ENCODE measurements at regions of chr1 and their contacts with region 1.

Region 1: DNA sequence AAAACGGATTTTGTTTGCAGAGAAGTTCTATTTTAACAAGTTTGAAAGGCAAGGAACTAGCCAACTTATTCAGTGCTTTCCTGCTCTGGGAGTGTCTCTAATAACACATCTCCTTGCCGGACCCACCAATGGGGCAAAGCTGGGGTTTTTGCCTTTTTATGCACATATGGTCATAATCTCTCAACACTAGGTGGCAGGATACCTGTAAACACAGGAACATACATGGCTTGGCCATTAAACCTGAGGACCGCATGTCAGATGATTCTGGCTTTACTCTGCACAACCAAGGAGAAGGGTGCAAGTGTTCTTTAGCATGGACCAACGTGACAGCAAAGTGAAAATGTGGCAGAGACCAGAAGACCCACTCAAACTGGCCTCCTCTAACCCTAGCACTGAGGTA is 4.9 kb downstream of the TMEM9 start:
- DNase-seq: peak; percentile 66 to 72 (median 70)
- ATAC-seq: peak; percentile 68
- H3K4me3 ChIP-seq: no peak overlapping the region
- H3K27ac ChIP-seq: no peak overlapping the region
- H3K4me1 ChIP-seq: peaks cover 8 to 16% of the 10 kb centered on the region in 2 experiments; a peak in 4 of 5 replicates
- H3K27me3 ChIP-seq: no peaks in the 10 kb centered on the region
- CTCF ChIP-seq: peak; percentile 72 to 86 (median 77)
- EP300 ChIP-seq: no peak
- POLR2A ChIP-seq: no peak
- RAD21 ChIP-seq: peak; percentile 70 to 83

Region 2: GRCh38 chr1:201184307-201185122 is 35.1 kb after region 1 on chr1:
- CTCF ChIA-PET with region 1: interaction called, 22 read pairs
- POLR2A ChIA-PET with region 1: interaction called, 3 read pairs
- in situ Hi-C with region 1: no loop called
- intact Hi-C with region 1: loop called (anchors 1 kb)
- DNase-seq: peak; percentile 33 to 61 (median 44)
- ATAC-seq: peak; percentile 98
- H3K4me3 ChIP-seq: no peak overlapping the region
- H3K27ac ChIP-seq: no peak overlapping the region
- H3K4me1 ChIP-seq: peaks cover 0 to 3% of the 10 kb centered on the region in 2 experiments; a peak in 1 of 5 replicates
- H3K27me3 ChIP-seq: peaks cover 35 to 69% of the 10 kb centered on the region in 2 experiments
- CTCF ChIP-seq: peak; percentile 78 to 91 (median 79)
- EP300 ChIP-seq: no peak
- POLR2A ChIP-seq: no peak
- RAD21 ChIP-seq: peak; percentile 61 to 82

Region 3: DNA sequence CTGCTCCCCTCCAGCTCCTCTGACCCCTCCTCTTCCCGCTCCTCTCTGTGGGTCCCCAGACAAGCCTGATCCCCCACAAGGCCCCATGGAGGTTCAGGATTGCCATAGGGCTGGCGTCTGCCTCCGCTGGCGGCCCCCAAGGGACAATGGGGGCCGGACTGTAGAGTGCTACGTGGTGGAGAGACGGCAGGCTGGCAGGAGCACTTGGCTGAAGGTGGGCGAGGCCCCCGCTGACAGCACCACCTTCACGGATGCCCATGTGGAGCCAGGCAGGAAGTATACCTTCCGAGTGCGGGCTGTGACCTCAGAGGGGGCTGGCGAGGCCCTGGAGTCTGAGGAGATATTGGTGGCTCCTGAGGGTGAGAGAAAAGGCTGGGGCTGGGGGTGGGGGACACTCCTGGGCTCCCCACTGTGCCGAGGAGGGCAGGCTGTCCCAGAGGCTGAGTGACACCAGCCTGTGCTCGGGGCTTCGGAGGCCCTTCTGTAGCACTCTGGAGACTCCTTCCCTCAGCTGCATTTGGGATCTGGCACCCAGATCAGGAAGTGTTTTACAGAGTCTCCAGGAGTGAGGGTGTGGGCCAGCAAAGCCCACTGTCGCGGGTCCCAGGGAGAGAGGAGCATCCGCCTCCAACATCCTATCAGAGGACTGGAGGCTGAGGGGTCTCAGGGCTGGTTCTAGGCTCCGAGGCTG is 67.1 kb after region 1 on chr1:
- CTCF ChIA-PET with region 1: no interaction called
- POLR2A ChIA-PET with region 1: interaction called, 4 read pairs
- in situ Hi-C with region 1: loop called (anchors 5 kb)
- intact Hi-C with region 1: no loop called
- DNase-seq: peak in 1 of 4 experiments; percentile 37
- ATAC-seq: no peak
- H3K4me3 ChIP-seq: no peak overlapping the region
- H3K27ac ChIP-seq: no peak overlapping the region
- H3K4me1 ChIP-seq: peaks cover 0 to 10% of the 10 kb centered on the region in 2 experiments; a peak in 1 of 5 replicates
- H3K27me3 ChIP-seq: peaks cover 21 to 64% of the 10 kb centered on the region in 2 experiments
- CTCF ChIP-seq: no peak
- EP300 ChIP-seq: no peak
- POLR2A ChIP-seq: no peak
- RAD21 ChIP-seq: no peak

Region 4: DNA sequence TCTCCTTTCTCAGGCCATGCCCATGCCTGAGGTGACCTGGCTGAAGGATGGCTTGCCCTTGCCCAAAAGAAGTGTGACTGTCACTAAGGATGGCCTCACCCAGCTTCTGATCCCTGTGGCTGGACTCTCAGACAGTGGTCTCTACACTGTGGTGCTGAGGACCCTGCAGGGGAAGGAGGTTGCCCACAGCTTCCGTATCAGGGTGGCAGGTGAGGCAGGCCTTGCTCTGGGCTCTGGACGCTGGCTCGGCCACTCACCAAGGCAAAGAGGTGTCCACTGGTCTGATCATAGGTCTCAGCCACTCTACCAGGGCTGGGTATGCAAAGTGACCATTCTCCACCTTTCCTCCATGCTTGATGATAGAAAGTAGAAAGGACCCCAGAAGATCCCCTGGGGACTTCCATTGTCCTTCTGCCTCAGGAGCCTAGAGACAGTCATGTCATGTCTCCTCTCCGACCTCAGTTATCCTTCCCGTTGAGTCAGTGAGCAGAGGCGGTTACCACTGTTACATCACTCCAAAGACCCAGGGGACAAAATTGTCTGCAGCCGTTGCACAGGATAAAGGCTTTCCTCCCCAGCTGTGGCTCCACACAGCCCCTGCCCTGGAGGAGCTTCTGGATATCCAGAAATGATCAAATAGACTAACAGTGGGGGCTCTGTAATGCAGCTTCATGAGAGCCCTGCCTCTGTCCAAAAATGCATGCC is 75.4 kb after region 1 on chr1:
- CTCF ChIA-PET with region 1: interaction called, 23 read pairs
- POLR2A ChIA-PET with region 1: no interaction called
- in situ Hi-C with region 1: no loop called
- intact Hi-C with region 1: loop called (anchors 1 kb)
- DNase-seq: no peak
- ATAC-seq: no peak
- H3K4me3 ChIP-seq: no peak overlapping the region
- H3K27ac ChIP-seq: no peak overlapping the region
- H3K4me1 ChIP-seq: peaks cover 0 to 7% of the 10 kb centered on the region in 2 experiments; a peak in 1 of 5 replicates
- H3K27me3 ChIP-seq: peaks cover 46 to 67% of the 10 kb centered on the region in 2 experiments
- CTCF ChIP-seq: no peak
- EP300 ChIP-seq: no peak
- POLR2A ChIP-seq: no peak
- RAD21 ChIP-seq: no peak

Region 5: DNA sequence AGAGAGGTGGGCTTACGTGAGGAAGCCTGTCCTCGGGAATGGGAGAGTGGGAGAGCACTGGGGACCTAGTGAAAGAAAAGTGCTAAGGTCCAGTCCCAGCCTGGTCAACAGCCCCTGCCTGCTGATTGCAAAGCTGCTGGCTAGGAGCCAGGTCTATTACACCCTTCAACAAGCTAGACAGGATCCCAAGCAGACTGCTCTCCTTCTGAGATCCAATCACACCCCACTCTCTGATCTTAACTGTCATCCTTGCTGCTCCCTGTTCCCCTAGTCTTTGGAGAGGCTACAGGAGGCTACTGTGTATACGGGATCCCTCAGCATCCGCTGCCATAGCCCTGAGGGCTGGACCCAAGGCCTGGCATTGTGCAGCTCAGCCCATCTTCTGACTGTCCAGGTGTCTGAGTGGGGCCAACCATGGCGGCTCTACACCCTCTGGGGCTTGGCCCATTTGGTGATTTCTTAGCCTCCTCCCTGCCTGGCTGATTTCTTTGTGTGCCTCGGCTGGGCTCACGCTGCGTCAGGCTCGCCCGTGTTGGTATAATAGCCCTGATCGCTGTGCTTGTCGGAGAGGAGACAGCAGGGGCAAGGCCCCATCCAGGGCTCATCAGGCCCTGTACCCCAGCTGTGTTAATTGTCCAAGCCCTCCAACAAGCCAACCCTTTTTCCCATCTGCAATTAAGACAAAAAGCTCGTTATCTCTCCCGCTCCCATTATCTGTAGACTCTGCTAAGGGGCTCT is 433.5 kb after region 1 on chr1:
- CTCF ChIA-PET with region 1: no interaction called
- POLR2A ChIA-PET with region 1: no interaction called
- in situ Hi-C with region 1: no loop called
- intact Hi-C with region 1: no loop called
- DNase-seq: peak; percentile 52 to 87 (median 70)
- ATAC-seq: peak; percentile 61
- H3K4me3 ChIP-seq: no peak overlapping the region
- H3K27ac ChIP-seq: peak overlapping the region; percentile 49
- H3K4me1 ChIP-seq: peaks cover 34 to 53% of the 10 kb centered on the region in 2 experiments
- H3K27me3 ChIP-seq: no peaks in the 10 kb centered on the region
- CTCF ChIP-seq: no peak
- EP300 ChIP-seq: no peak; the same call in 1 of the 2 replicates
- POLR2A ChIP-seq: no peak
- RAD21 ChIP-seq: no peak